CD4-positive, alpha-beta T cell (primary cell): ENCODE measurements at regions of chr4 and their contacts with region 1.

Region 1: GRCh38 chr4:140686796-140687195 is 69.4 kb downstream of the TBC1D9 start:
- DNase-seq: no peak
- ATAC-seq: no peak
- H3K4me3 ChIP-seq: no peak overlapping the region
- H3K4me3 Mint-ChIP-seq: no peak overlapping the region
- H3K27ac ChIP-seq: no peak overlapping the region
- H3K27ac Mint-ChIP-seq: no peak overlapping the region
- H3K4me1 ChIP-seq: no peaks in the 10 kb centered on the region
- H3K4me1 Mint-ChIP-seq: no peaks in the 10 kb centered on the region
- H3K27me3 ChIP-seq: peaks cover 0 to 3% of the 10 kb centered on the region in 2 experiments
- H3K27me3 Mint-ChIP-seq: peaks cover 21% of the 10 kb centered on the region
- CTCF ChIP-seq: no peak

Region 2: DNA sequence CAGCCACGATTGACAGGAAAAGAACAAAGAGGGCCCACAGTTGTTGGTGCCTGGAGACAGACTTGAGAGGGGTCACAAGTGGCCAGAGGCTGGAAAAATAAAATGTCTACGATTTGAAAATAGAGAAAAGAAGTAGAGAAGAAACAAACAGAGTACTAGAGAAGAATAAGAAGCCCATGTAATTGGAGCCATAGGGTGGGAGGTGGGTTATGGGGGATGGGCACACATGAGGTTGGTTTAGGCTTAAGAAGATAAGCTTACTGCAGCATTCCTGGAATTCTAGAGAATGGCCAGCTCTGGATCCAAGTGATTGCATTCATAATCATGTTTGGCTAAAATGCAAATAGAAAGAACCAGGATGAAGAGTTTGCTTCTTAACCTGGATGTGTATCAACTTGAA is 743.5 kb before region 1 on chr4:
- CTCF ChIA-PET with region 1: no interaction called
- POLR2A ChIA-PET with region 1: no interaction called
- intact Hi-C with region 1: no loop called
- DNase-seq: no peak
- ATAC-seq: no peak
- H3K4me3 ChIP-seq: no peak overlapping the region
- H3K4me3 Mint-ChIP-seq: no peak overlapping the region
- H3K27ac ChIP-seq: no peak overlapping the region
- H3K27ac Mint-ChIP-seq: no peak overlapping the region
- H3K4me1 ChIP-seq: no peaks in the 10 kb centered on the region
- H3K4me1 Mint-ChIP-seq: peaks cover 4% of the 10 kb centered on the region
- H3K27me3 ChIP-seq: no peaks in the 10 kb centered on the region
- H3K27me3 Mint-ChIP-seq: no peaks in the 10 kb centered on the region
- CTCF ChIP-seq: no peak

Region 3: GRCh38 chr4:140609548-140610425 is 77.0 kb before region 1 on chr4:
- CTCF ChIA-PET with region 1: no interaction called
- POLR2A ChIA-PET with region 1: no interaction called
- intact Hi-C with region 1: no loop called
- DNase-seq: peak in 3 of 14 experiments; percentile 24 to 43 (median 32)
- ATAC-seq: no peak
- H3K4me3 ChIP-seq: no peak overlapping the region
- H3K4me3 Mint-ChIP-seq: no peak overlapping the region
- H3K27ac ChIP-seq: no peak overlapping the region
- H3K27ac Mint-ChIP-seq: no peak overlapping the region
- H3K4me1 ChIP-seq: no peaks in the 10 kb centered on the region
- H3K4me1 Mint-ChIP-seq: no peaks in the 10 kb centered on the region
- H3K27me3 ChIP-seq: peaks cover 0 to 3% of the 10 kb centered on the region in 2 experiments
- H3K27me3 Mint-ChIP-seq: peaks cover 8% of the 10 kb centered on the region
- CTCF ChIP-seq: peak; percentile 49

Region 4: GRCh38 chr4:140697709-140698560 is 11.1 kb after region 1 on chr4:
- CTCF ChIA-PET with region 1: no interaction called
- POLR2A ChIA-PET with region 1: no interaction called
- intact Hi-C with region 1: loop called in 1 of 2 experiments (anchors 1 kb)
- DNase-seq: no peak
- ATAC-seq: no peak
- H3K4me3 ChIP-seq: no peak overlapping the region
- H3K4me3 Mint-ChIP-seq: no peak overlapping the region
- H3K27ac ChIP-seq: no peak overlapping the region
- H3K27ac Mint-ChIP-seq: no peak overlapping the region
- H3K4me1 ChIP-seq: no peaks in the 10 kb centered on the region
- H3K4me1 Mint-ChIP-seq: no peaks in the 10 kb centered on the region
- H3K27me3 ChIP-seq: no peaks in the 10 kb centered on the region
- H3K27me3 Mint-ChIP-seq: peaks cover 7% of the 10 kb centered on the region
- CTCF ChIP-seq: no peak